ENCODE measurements at regions of chr13 and their contacts with region 1.

Region 1: DNA sequence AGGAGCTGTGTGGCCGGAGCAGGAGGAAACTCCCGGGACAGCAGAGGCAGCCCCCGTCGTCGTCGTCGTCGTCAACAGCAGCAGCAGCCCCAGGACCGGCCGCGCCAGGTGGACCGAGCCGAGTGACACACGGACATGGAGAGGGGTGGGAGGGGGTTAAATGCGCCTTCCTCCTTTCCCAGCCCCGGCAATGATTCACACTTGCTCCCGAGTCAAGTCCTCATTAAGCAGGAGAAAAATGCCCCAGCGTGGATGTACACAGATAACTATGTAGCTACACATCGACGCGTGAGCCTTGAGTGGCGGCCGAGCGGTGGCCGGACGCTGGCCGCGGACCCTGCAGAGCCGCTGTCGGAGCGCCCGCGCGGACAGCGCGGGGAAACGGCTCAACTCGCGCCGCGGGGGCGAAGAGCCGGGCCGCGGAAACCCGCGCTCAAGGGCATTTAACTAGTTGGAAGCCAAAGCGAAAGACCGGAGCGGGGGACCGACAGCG is 640 bp downstream of the UBL3 start:
- DNase-seq: peak; percentile 63
- H3K4me3 ChIP-seq: peak overlapping the region; percentile 84
- H3K27ac ChIP-seq: peak overlapping the region; percentile 99
- H3K4me1 ChIP-seq: peaks cover 5% of the 10 kb centered on the region
- H3K27me3 ChIP-seq: no peaks in the 10 kb centered on the region
- CTCF ChIP-seq: no peak

Region 2: DNA sequence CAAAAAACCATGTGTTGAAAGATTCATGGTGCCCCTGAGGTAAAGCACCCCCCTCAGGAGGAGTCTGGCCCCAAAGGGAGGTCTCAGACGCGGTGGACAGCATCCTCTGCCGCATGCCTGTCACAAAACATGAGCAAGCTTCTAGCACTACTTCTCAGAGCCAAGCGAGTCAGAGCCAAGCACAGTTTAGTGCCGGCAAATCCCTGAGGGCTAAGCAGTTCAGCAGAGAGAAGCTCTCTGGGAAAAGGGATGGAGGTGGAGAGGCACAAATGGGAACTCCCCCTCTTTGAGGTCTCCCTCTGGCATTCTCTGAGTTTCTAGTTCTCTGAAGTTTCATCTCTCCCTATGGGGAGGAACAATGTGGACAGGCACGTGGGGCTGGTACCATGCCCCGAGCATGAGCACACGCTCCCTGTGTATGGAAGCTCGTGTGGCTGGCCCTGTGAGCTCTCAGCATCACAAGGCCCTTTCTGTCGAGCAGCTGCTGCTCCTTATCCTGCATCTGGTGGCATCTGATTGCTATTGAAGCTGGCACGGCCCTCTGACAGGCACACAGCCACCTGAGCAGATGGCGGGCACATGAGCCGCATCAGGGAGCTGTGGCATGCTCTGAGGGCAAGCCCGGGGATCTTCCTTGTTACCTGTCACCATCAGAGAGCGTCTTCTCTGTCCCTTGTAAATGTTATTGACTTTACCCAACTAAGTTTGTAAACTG is 579.3 kb before region 1 on chr13:
- intact Hi-C with region 1: no loop called
- DNase-seq: no peak
- H3K4me3 ChIP-seq: no peak overlapping the region
- H3K27ac ChIP-seq: no peak overlapping the region
- H3K4me1 ChIP-seq: no peaks in the 10 kb centered on the region
- H3K27me3 ChIP-seq: no peaks in the 10 kb centered on the region
- CTCF ChIP-seq: no peak

Region 3: DNA sequence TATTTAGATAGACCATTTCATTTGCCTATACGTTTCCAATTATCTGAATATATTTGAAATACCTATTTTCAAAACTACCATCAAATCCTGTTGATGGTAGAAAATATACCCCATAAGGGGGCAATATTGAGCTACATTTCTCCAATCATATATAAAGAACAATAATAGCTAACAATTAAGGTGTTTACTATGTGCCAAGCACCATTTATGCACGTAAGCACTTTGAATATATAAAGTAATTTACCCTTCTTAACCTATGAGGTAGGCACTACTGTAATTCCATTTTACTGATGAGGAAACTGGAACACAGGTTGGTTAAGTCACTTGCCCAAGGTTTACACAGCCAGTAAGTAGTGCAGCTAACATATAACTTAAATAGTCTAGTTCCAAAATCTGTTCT is 78.5 kb before region 1 on chr13:
- intact Hi-C with region 1: loop called (anchors 5 kb)
- DNase-seq: no peak
- H3K4me3 ChIP-seq: no peak overlapping the region
- H3K27ac ChIP-seq: no peak overlapping the region
- H3K4me1 ChIP-seq: no peaks in the 10 kb centered on the region
- H3K27me3 ChIP-seq: no peaks in the 10 kb centered on the region
- CTCF ChIP-seq: peak; percentile 36

Region 4: DNA sequence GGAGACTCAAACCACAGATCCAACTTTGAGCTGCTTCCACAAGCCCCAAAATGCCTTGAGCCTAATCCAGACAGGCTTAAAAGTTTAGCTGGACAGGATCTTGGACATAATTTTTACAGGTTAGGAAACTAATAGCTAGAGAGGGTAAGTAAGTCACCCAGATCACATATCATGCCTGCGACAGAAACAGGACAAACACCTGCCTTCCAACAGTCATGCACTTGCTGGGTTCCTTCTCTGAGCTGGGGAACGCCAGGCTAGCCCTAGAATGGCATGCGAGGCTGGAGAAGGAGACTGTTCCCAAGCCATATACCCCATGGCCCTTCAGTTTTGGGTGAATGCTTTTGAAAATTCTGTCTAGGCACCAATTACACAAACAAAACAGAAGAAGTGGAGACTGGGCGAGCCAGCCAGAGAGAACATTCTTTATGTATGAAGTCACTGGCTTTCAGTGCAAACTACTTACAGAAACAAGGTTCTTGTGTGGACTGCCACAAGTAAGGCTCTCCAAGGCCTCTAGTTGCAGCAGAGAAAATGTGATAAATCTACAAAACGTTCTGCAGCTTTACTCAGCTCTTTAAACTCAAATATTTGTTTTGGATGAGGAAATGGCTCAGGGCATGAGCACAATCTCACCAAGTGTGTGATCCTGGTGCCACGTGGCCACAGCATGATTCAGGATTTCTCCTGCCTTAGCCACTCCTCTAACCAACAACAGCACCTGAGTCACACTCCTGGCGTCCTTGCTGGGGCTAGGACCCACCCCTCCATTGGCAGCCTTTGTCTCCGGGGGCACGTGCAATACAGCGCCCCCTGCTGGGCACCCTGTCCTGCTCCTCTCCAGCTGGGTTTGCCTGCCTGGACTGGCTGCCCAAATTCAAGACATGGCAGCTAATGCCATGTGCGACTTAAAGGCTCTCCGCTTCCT is 74.0 kb after region 1 on chr13:
- intact Hi-C with region 1: loop called (anchors 2 kb)
- DNase-seq: peak; percentile 93
- H3K4me3 ChIP-seq: no peak overlapping the region
- H3K27ac ChIP-seq: peak overlapping the region; percentile 65
- H3K4me1 ChIP-seq: peaks cover 14% of the 10 kb centered on the region
- H3K27me3 ChIP-seq: no peaks in the 10 kb centered on the region
- CTCF ChIP-seq: peak; percentile 90

Measured in colonic mucosa (tissue), 4 donors.